ENCODE measurements at regions of chr3 and their contacts with region 1.

Region 1: DNA sequence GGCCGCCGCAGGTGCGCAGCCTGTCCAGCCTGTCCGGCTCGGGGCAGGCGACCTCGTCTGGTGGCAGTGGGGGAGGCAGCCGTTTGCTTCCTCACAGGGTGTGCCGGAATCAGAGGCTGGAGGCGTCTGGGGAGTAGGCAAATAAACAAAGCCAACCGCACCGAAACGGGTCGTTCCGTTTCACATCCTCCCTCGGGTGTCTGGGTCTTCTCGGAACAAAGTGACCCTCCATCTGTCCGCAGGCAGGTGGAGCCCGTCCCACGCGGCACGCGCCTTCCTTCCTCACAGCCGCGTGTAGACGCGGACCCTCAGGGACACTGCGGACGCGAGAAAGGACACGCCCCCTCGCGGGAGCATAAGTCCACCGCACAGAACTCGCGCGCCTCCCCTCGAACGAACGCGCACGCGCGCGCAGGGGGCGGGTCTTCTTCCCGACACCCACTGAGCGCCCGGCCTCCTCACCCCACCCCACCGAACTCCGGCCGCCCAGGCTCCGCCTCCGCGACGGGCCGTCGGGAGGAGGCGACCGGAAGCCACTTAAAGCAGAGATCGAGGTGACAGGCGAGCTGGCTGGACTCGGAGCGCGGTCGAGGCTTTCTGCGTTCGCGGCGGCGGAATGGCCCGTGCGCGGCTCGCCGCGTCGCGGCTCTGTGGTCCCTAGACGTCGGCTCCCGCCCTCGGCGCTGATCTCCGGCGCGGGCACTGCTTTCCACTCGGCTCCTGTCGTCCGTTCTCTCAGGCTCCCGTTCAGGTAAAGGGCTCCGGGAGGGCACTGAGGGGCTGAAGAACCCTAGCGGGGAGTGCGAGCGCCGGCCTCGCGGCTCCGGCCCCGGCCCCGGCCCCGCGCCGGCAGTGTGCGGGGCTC is at the start of gene TIPARP:
- DNase-seq: peak; percentile 95 to 100 (median 98)
- ATAC-seq: peak; percentile 93
- H3K4me3 ChIP-seq: peak within 1 kb of the TSS; percentile 93
- H3K4me3 Mint-ChIP-seq: peak within 1 kb of the TSS; percentile 94 to 98 (median 97)
- H3K27ac ChIP-seq: peak within 1 kb of the TSS; percentile 85
- H3K27ac Mint-ChIP-seq: peak within 1 kb of the TSS; percentile 94 to 99 (median 97)
- H3K4me1 ChIP-seq: peaks cover 25 to 28% of the 10 kb centered on the region in 2 donors
- H3K4me1 Mint-ChIP-seq: peaks cover 34 to 44% (median 39%) of the 10 kb centered on the region in 7 donors
- H3K27me3 ChIP-seq: no peaks in the 10 kb centered on the region
- H3K27me3 Mint-ChIP-seq: no peaks in the 10 kb centered on the region
- total RNA-seq, gene TIPARP: 59.2 to 66.6 (median 64.3) TPM

Region 2: DNA sequence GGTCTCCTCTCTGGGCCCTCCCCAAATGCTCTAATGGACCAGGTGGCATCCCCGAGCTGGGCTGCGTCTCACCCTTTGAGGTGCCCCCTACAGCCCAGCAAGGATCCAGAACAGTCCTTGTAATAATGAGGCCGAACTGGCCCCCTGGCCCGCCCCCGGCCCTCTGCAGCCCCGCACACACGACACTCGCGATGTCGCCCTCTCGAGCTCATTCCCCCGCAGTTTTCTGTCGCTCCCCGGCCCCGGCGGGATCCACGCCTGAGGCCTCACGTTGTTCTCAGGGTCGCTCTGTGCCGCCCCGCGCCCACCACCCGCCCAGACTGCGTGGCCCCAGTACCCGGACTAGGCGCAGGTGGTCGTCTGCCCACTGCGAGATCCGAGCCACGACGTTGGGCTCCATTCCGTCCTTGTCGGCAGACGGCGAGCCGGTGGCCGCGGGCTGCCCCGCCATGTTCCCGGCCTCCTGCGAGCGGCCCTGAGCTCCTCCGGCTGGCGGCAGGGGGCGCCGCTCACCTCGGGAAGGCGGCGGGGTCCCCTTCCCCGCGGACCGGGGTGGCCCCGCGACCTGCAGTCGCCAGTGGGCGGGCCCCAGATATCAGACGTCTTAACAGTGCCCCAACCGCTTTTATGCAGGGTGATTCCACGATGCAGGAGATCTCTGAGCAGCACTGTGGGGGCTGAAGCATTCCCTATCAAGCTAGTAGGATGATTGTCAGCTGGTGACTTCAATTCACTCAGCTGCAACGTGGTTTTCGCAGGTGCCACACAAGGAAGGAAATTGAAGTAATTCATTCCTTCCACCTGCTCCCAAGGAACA is 868.3 kb before region 1 on chr3 and contains the start of gene C3orf33:
- CTCF ChIA-PET with region 1: no interaction called
- POLR2A ChIA-PET with region 1: no interaction called
- intact Hi-C with region 1: loop called in 1 of 2 experiments (anchors 5 kb)
- DNase-seq: peak; percentile 52 to 85 (median 78)
- ATAC-seq: peak; percentile 98
- H3K4me3 ChIP-seq: peak within 1 kb of the TSS; percentile 71
- H3K4me3 Mint-ChIP-seq: peak within 1 kb of the TSS; percentile 79 to 91 (median 90)
- H3K27ac ChIP-seq: peak within 1 kb of the TSS; percentile 79
- H3K27ac Mint-ChIP-seq: peak within 1 kb of the TSS; percentile 71 to 94 (median 82)
- H3K4me1 ChIP-seq: no peaks in the 10 kb centered on the region
- H3K4me1 Mint-ChIP-seq: peaks cover 8 to 28% (median 17%) of the 10 kb centered on the region in 7 donors
- H3K27me3 ChIP-seq: no peaks in the 10 kb centered on the region
- H3K27me3 Mint-ChIP-seq: peaks cover 6 to 15% (median 10%) of the 10 kb centered on the region in 5 donors
- total RNA-seq, gene C3orf33: 1.1 to 4.6 (median 2.7) TPM

Region 3: GRCh38 chr3:156341831-156342416 is 332.4 kb before region 1 on chr3:
- CTCF ChIA-PET with region 1: no interaction called
- POLR2A ChIA-PET with region 1: no interaction called
- intact Hi-C with region 1: no loop called
- DNase-seq: no peak
- ATAC-seq: no peak
- H3K4me3 ChIP-seq: no peak overlapping the region
- H3K4me3 Mint-ChIP-seq: no peak overlapping the region
- H3K27ac ChIP-seq: no peak overlapping the region
- H3K27ac Mint-ChIP-seq: no peak overlapping the region
- H3K4me1 ChIP-seq: no peaks in the 10 kb centered on the region
- H3K4me1 Mint-ChIP-seq: peaks cover 0 to 3% (median 0%) of the 10 kb centered on the region in 7 donors
- H3K27me3 ChIP-seq: no peaks in the 10 kb centered on the region
- H3K27me3 Mint-ChIP-seq: peaks cover 0 to 26% (median 25%) of the 10 kb centered on the region in 5 donors

Region 4: GRCh38 chr3:156483961-156484787 is 190.1 kb before region 1 on chr3:
- CTCF ChIA-PET with region 1: no interaction called
- POLR2A ChIA-PET with region 1: interaction called, 3 read pairs
- intact Hi-C with region 1: loop called (anchors 1 kb)
- DNase-seq: peak in 8 of 9 donors; percentile 35 to 68 (median 62)
- ATAC-seq: peak; percentile 88
- H3K4me3 ChIP-seq: peak overlapping the region; percentile 47
- H3K4me3 Mint-ChIP-seq: peak overlapping the region; percentile 52 to 85 (median 74)
- H3K27ac ChIP-seq: peak overlapping the region; percentile 63
- H3K27ac Mint-ChIP-seq: peak overlapping the region; percentile 76 to 95 (median 83)
- H3K4me1 ChIP-seq: peaks cover 21 to 25% of the 10 kb centered on the region in 2 donors
- H3K4me1 Mint-ChIP-seq: peaks cover 14 to 40% (median 35%) of the 10 kb centered on the region in 7 donors
- H3K27me3 ChIP-seq: no peaks in the 10 kb centered on the region
- H3K27me3 Mint-ChIP-seq: peaks cover 0 to 17% (median 0%) of the 10 kb centered on the region in 5 donors

Region 5: GRCh38 chr3:156643729-156644389 is 30.4 kb before region 1 on chr3:
- CTCF ChIA-PET with region 1: no interaction called
- POLR2A ChIA-PET with region 1: interaction called, 5 read pairs
- intact Hi-C with region 1: loop called (anchors 1 kb)
- DNase-seq: peak in 8 of 9 donors; percentile 20 to 52 (median 38)
- ATAC-seq: peak; percentile 93
- H3K4me3 ChIP-seq: peak overlapping the region; percentile 17
- H3K4me3 Mint-ChIP-seq: peak overlapping the region; percentile 58 to 85 (median 70)
- H3K27ac ChIP-seq: no peak overlapping the region
- H3K27ac Mint-ChIP-seq: peak overlapping the region in 7 of 9 donors; percentile 3 to 92 (median 23)
- H3K4me1 ChIP-seq: peaks cover 5 to 13% of the 10 kb centered on the region in 2 donors
- H3K4me1 Mint-ChIP-seq: peaks cover 7 to 30% (median 16%) of the 10 kb centered on the region in 7 donors
- H3K27me3 ChIP-seq: no peaks in the 10 kb centered on the region
- H3K27me3 Mint-ChIP-seq: peaks cover 6 to 12% (median 7%) of the 10 kb centered on the region in 5 donors

Region 6: DNA sequence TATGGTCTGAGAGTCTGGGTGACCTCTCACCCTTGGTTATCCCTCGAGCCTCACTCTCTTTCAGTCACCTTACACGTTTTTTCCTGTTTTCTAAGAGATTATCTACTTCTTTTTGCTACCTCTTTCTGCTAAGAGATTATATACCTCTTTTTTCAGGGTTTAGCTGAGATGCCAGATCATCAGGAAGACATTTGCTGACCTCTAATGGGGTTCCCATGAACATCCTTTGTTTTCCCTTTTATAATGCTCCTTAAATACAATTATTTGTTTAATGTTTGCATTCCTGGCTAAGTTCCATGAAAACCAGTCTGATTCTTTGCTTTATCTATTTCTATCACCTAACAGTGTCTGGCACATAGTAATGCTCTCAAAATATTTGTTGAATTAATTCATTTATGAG is 191.5 kb after region 1 on chr3:
- CTCF ChIA-PET with region 1: no interaction called
- POLR2A ChIA-PET with region 1: no interaction called
- intact Hi-C with region 1: loop called in 1 of 2 experiments (anchors 1 kb)
- DNase-seq: no peak
- ATAC-seq: no peak
- H3K4me3 ChIP-seq: no peak overlapping the region
- H3K4me3 Mint-ChIP-seq: no peak overlapping the region
- H3K27ac ChIP-seq: no peak overlapping the region
- H3K27ac Mint-ChIP-seq: no peak overlapping the region
- H3K4me1 ChIP-seq: no peaks in the 10 kb centered on the region
- H3K4me1 Mint-ChIP-seq: peaks cover 0 to 5% (median 0%) of the 10 kb centered on the region in 7 donors
- H3K27me3 ChIP-seq: no peaks in the 10 kb centered on the region
- H3K27me3 Mint-ChIP-seq: peaks cover 0 to 16% (median 0%) of the 10 kb centered on the region in 5 donors

Region 7: GRCh38 chr3:157136647-157137387 is 462.5 kb after region 1 on chr3:
- CTCF ChIA-PET with region 1: interaction called, 5 read pairs
- POLR2A ChIA-PET with region 1: interaction called, 4 read pairs
- intact Hi-C with region 1: loop called in 1 of 2 experiments (anchors 1 kb)
- DNase-seq: no peak
- ATAC-seq: no peak
- H3K4me3 ChIP-seq: no peak overlapping the region
- H3K4me3 Mint-ChIP-seq: peak overlapping the region in 2 of 10 donors; percentile 65 to 80
- H3K27ac ChIP-seq: peak overlapping the region; percentile 14
- H3K27ac Mint-ChIP-seq: peak overlapping the region in 7 of 9 donors; percentile 5 to 91 (median 78)
- H3K4me1 ChIP-seq: peaks cover 6 to 31% of the 10 kb centered on the region in 2 donors
- H3K4me1 Mint-ChIP-seq: peaks cover 3 to 65% (median 21%) of the 10 kb centered on the region in 7 donors
- H3K27me3 ChIP-seq: no peaks in the 10 kb centered on the region
- H3K27me3 Mint-ChIP-seq: no peaks in the 10 kb centered on the region

Region 8: DNA sequence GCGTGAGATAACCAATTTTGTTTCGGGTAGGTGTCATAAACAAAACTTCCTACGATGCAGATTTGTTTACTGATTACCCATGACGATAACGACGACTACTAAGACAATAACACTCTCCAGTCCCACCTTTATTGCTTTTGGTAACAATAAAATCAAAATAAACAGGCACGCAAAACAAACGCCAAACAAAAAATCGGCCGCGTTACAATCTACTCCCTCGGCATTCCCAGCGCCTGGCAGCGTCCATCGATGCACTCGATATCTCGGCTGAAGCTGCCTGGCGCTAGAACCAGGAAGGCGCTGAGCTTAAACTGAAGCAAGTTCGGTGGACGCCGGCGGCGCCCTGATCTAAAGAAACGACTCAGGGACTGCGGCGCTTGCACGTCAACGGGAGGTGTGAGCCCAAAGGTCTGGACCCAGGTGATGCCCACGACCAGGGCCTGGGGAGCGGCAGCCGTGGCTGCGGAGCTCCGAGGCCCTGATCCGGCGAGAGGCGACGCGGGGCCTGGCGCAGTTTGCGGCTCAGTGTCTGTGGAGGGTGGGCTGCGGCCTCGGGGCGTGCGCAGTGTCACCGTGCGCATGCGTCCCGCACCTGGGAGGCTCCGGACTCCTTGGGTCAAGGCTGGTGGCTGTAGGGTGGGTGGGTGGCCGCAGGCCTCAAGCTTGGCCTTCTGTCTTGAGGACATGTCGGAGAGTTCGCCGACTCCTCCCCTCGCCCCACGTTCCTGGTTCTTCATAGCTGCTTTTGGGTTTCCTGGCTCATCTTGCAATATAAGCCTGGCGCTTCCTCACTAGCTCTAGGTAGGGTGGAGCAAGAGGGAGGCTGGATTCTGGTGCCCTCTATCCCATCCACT is 1435.8 kb after region 1 on chr3 and contains the start of gene RSRC1:
- CTCF ChIA-PET with region 1: no interaction called
- POLR2A ChIA-PET with region 1: no interaction called
- intact Hi-C with region 1: loop called in 1 of 2 experiments (anchors 10 kb)
- DNase-seq: peak; percentile 42 to 81 (median 73)
- ATAC-seq: peak; percentile 96
- H3K4me3 ChIP-seq: peak within 1 kb of the TSS; percentile 90
- H3K4me3 Mint-ChIP-seq: peak within 1 kb of the TSS; percentile 91 to 100 (median 98)
- H3K27ac ChIP-seq: peak within 1 kb of the TSS; percentile 61
- H3K27ac Mint-ChIP-seq: peak within 1 kb of the TSS; percentile 61 to 96 (median 88)
- H3K4me1 ChIP-seq: peaks cover 26 to 37% of the 10 kb centered on the region in 2 donors
- H3K4me1 Mint-ChIP-seq: peaks cover 39 to 84% (median 65%) of the 10 kb centered on the region in 7 donors
- H3K27me3 ChIP-seq: peaks cover 18 to 34% of the 10 kb centered on the region in 2 donors
- H3K27me3 Mint-ChIP-seq: peaks cover 34 to 45% (median 39%) of the 10 kb centered on the region in 5 donors
- total RNA-seq, gene RSRC1: 30.0 to 45.0 (median 37.4) TPM